T-cell (primary cell): ENCODE measurements at regions of chrX and their contacts with region 1.

Region 1: DNA sequence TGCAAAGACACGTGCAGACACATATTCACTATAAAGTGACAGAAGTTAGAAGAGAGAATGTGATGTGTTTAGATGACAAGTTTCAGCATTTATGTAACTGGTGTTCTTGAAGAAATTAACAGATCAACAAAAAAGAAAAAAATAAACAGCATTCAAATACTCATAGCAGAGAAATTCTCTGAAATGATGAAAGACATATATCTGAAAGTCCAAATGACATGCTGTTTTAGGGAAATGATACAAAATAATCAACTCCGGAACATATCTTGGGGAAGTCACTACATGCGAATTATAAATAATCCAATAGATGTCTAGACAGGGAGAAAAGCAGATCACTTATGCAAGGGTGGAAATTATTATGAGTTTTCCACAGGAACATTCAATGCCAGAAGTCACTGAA is 146.0 kb downstream of the SPANXN4 start:
- DNase-seq: no peak
- ATAC-seq: no peak
- H3K4me3 ChIP-seq: no peak overlapping the region
- H3K4me3 Mint-ChIP-seq: no peak overlapping the region
- H3K27ac ChIP-seq: no peak overlapping the region
- H3K27ac Mint-ChIP-seq: no peak overlapping the region
- H3K4me1 ChIP-seq: no peaks in the 10 kb centered on the region
- H3K4me1 Mint-ChIP-seq: no peaks in the 10 kb centered on the region
- H3K27me3 ChIP-seq: no peaks in the 10 kb centered on the region
- H3K27me3 Mint-ChIP-seq: peaks cover 0 to 3% of the 10 kb centered on the region in 2 donors

Region 2: DNA sequence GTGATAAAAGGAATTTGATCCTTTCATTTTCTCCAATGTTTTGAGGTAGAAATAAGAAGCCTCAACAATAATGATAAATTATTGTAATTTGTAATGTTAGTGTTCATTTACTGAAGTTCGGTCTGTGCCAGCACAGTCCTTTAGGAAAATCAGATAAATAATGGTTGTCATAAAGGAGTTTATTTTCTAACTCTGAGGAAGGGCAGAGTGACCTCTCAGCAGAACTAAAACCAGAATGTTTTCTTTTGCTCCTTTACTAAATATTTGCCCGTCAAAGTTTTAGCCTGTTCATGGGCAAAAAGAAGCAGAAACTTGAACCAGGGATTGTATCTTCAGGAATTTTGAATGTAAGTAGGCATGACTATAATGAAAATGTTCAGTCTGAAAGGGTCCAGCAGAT is 238.7 kb before region 1 on chrX:
- CTCF ChIA-PET with region 1: interaction called in 1 of 2 experiments, 12 read pairs
- POLR2A ChIA-PET with region 1: no interaction called
- DNase-seq: no peak
- ATAC-seq: no peak
- H3K4me3 ChIP-seq: no peak overlapping the region
- H3K4me3 Mint-ChIP-seq: no peak overlapping the region
- H3K27ac ChIP-seq: no peak overlapping the region
- H3K27ac Mint-ChIP-seq: no peak overlapping the region
- H3K4me1 ChIP-seq: no peaks in the 10 kb centered on the region
- H3K4me1 Mint-ChIP-seq: no peaks in the 10 kb centered on the region
- H3K27me3 ChIP-seq: no peaks in the 10 kb centered on the region
- H3K27me3 Mint-ChIP-seq: no peaks in the 10 kb centered on the region

Region 3: DNA sequence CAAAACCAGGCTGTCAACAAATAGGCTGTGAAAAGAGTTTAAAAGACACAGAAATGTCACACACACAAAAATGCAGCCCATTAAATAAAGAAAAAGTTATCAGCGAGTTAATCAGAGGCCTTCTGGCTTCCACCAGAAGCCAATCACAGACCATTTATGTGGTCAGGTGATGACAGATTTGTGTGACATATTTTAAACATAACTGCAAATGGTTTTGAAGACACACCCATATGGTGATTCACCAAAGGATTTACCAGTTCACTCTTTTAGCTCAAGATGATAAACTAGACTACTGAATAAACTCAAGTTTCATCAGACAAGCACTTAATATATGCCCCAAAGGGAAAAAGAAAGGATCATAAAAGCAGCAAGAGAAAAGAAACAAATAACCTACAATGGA is 35.2 kb after region 1 on chrX:
- CTCF ChIA-PET with region 1: no interaction called
- POLR2A ChIA-PET with region 1: no interaction called
- DNase-seq: no peak
- ATAC-seq: no peak
- H3K4me3 ChIP-seq: no peak overlapping the region
- H3K4me3 Mint-ChIP-seq: no peak overlapping the region
- H3K27ac ChIP-seq: no peak overlapping the region
- H3K27ac Mint-ChIP-seq: no peak overlapping the region
- H3K4me1 ChIP-seq: no peaks in the 10 kb centered on the region
- H3K4me1 Mint-ChIP-seq: no peaks in the 10 kb centered on the region
- H3K27me3 ChIP-seq: no peaks in the 10 kb centered on the region
- H3K27me3 Mint-ChIP-seq: no peaks in the 10 kb centered on the region

Region 4: GRCh38 chrX:143270317-143270716 is 98.6 kb after region 1 on chrX:
- CTCF ChIA-PET with region 1: no interaction called
- POLR2A ChIA-PET with region 1: no interaction called
- DNase-seq: no peak
- ATAC-seq: no peak
- H3K4me3 ChIP-seq: no peak overlapping the region
- H3K4me3 Mint-ChIP-seq: no peak overlapping the region
- H3K27ac ChIP-seq: no peak overlapping the region
- H3K27ac Mint-ChIP-seq: no peak overlapping the region
- H3K4me1 ChIP-seq: no peaks in the 10 kb centered on the region
- H3K4me1 Mint-ChIP-seq: no peaks in the 10 kb centered on the region
- H3K27me3 ChIP-seq: no peaks in the 10 kb centered on the region
- H3K27me3 Mint-ChIP-seq: peaks cover 0 to 4% of the 10 kb centered on the region in 2 donors